ENCODE measurements at regions of chr19 and their contacts with region 1.

Region 1: GRCh38 chr19:47035127-47036096 is 13.0 kb downstream of the TMEM160 start:
- DNase-seq: peak; percentile 97
- H3K4me3 Mint-ChIP-seq: peak overlapping the region; percentile 81
- H3K27ac Mint-ChIP-seq: peak overlapping the region; percentile 43
- H3K4me1 Mint-ChIP-seq: peaks cover 19% of the 10 kb centered on the region
- H3K27me3 Mint-ChIP-seq: peaks cover 8% of the 10 kb centered on the region

Region 2: GRCh38 chr19:47047763-47048405 is 12.5 kb after region 1 on chr19:
- CTCF ChIA-PET with region 1: interaction called, 11 read pairs
- intact Hi-C with region 1: loop called (anchors 1 kb)
- DNase-seq: peak; percentile 91
- H3K4me3 Mint-ChIP-seq: peak overlapping the region; percentile 98
- H3K27ac Mint-ChIP-seq: peak overlapping the region; percentile 84
- H3K4me1 Mint-ChIP-seq: peaks cover 13% of the 10 kb centered on the region
- H3K27me3 Mint-ChIP-seq: no peaks in the 10 kb centered on the region

Region 3: GRCh38 chr19:47124937-47125668 is 89.7 kb after region 1 on chr19:
- CTCF ChIA-PET with region 1: interaction called, 35 read pairs
- intact Hi-C with region 1: loop called (anchors 1 kb)
- DNase-seq: no peak
- H3K4me3 Mint-ChIP-seq: no peak overlapping the region
- H3K27ac Mint-ChIP-seq: no peak overlapping the region
- H3K4me1 Mint-ChIP-seq: peaks cover 5% of the 10 kb centered on the region
- H3K27me3 Mint-ChIP-seq: no peaks in the 10 kb centered on the region

Region 4: GRCh38 chr19:47130591-47131227 is 95.3 kb after region 1 on chr19 and contains the start of gene SAE1:
- CTCF ChIA-PET with region 1: interaction called, 35 read pairs
- intact Hi-C with region 1: loop called (anchors 1 kb)
- DNase-seq: peak; percentile 95
- H3K4me3 Mint-ChIP-seq: peak within 1 kb of the TSS; percentile 99
- H3K27ac Mint-ChIP-seq: peak within 1 kb of the TSS; percentile 99
- H3K4me1 Mint-ChIP-seq: peaks cover 41% of the 10 kb centered on the region
- H3K27me3 Mint-ChIP-seq: no peaks in the 10 kb centered on the region
- total RNA-seq, gene SAE1: 160 to 161 TPM